Activated naive CD4-positive, alpha-beta T cell treated with anti-CD3 and anti-CD28 coated beads, Interleukin-2, amount 10 ng/mL, durations not matched to agents 7 days and 5 days (primary cell): ENCODE measurements at regions of chr2 and their contacts with region 1.

Region 1: GRCh38 chr2:237474931-237475703 is 11.9 kb upstream of the MLPH start:
- DNase-seq: peak; percentile 79
- H3K4me3 Mint-ChIP-seq: peak overlapping the region; percentile 76
- H3K27ac Mint-ChIP-seq: peak overlapping the region; percentile 76
- H3K4me1 Mint-ChIP-seq: peaks cover 13% of the 10 kb centered on the region
- H3K27me3 Mint-ChIP-seq: peaks cover 28% of the 10 kb centered on the region

Region 2: DNA sequence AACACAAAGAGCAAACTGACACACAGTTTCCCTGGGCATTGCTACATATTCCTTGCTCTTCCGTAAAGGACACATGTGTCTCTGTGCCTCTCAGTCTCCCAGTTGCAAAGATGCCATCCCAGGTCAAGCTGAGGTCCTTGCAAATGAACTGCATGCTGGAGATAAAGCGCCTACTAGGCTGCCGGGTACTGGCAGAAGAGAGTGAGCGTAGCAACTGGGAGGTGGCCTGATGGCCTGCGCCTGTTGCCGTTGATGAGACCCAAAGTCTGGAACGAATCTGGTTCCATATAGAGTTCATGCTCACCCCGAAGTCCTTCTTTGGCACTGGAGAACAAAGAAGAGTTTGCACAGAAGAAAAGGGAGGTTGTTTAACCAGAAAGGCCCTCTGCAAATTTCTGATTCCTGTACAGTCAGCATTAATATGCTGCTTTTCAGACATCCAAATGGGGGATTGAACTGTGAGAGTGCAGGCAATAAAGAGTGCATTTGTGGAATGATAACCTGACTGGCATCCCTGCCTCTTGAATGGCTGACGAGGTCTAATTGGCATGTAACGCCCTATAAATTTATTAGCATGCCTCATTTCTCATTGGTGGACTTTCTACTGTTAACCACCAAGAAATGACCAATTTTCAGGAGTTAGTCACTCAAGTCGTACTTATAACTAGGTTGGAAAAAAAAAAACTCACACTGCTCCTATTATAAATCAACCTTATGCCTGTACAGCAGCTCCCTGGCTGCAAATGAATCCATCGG is 1385.7 kb before region 1 on chr2:
- CTCF ChIA-PET with region 1: no interaction called
- DNase-seq: no peak
- H3K4me3 Mint-ChIP-seq: no peak overlapping the region
- H3K27ac Mint-ChIP-seq: no peak overlapping the region
- H3K4me1 Mint-ChIP-seq: no peaks in the 10 kb centered on the region
- H3K27me3 Mint-ChIP-seq: no peaks in the 10 kb centered on the region

Region 3: GRCh38 chr2:237154082-237154638 is 321.0 kb before region 1 on chr2:
- CTCF ChIA-PET with region 1: interaction called, 13 read pairs
- DNase-seq: peak; percentile 65
- H3K4me3 Mint-ChIP-seq: no peak overlapping the region
- H3K27ac Mint-ChIP-seq: no peak overlapping the region
- H3K4me1 Mint-ChIP-seq: peaks cover 10% of the 10 kb centered on the region
- H3K27me3 Mint-ChIP-seq: peaks cover 24% of the 10 kb centered on the region

Region 4: GRCh38 chr2:237165405-237166276 is 309.5 kb before region 1 on chr2:
- CTCF ChIA-PET with region 1: interaction called, 10 read pairs
- DNase-seq: no peak
- H3K4me3 Mint-ChIP-seq: no peak overlapping the region
- H3K27ac Mint-ChIP-seq: no peak overlapping the region
- H3K4me1 Mint-ChIP-seq: no peaks in the 10 kb centered on the region
- H3K27me3 Mint-ChIP-seq: peaks cover 24% of the 10 kb centered on the region

Region 5: DNA sequence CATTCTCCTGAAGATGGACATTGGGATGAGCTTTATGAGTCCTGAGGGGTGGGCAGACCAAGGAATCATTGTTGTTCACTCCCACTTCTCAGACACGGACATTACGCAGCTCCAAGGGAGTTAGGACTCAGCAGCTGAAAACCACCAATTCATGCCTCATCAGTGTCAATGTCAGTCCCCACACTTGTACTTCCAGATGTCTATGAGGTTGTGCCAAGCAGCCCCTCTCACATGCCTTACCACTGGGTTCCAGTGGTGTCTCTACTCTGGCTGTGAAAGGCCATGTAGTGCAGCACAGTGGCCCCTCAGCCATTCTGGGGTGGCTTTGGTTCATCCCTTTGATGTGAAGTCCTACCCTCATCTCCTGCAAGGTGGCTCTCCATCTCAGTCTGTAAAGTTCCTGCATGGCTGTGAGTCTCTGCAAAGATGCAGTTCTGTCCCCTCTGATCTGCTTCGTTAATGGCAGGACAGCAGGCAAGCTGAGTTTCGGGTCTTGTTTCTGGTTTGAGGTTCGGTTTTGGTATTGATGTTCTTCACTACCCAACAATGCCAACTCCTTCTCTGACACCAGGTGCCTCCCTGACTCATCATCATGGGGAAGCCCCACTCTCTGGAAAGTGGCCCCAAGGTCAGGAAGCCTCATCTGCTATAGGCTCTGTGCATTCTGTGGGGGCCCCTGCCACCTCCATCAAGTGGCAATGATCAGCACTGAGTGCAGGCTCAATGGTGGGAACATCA is 47.2 kb before region 1 on chr2:
- CTCF ChIA-PET with region 1: interaction called, 110 read pairs
- DNase-seq: peak; percentile 64
- H3K4me3 Mint-ChIP-seq: no peak overlapping the region
- H3K27ac Mint-ChIP-seq: peak overlapping the region; percentile 60
- H3K4me1 Mint-ChIP-seq: peaks cover 65% of the 10 kb centered on the region
- H3K27me3 Mint-ChIP-seq: peaks cover 3% of the 10 kb centered on the region